ENCODE measurements at regions of chr3 and their contacts with region 1.

Region 1: DNA sequence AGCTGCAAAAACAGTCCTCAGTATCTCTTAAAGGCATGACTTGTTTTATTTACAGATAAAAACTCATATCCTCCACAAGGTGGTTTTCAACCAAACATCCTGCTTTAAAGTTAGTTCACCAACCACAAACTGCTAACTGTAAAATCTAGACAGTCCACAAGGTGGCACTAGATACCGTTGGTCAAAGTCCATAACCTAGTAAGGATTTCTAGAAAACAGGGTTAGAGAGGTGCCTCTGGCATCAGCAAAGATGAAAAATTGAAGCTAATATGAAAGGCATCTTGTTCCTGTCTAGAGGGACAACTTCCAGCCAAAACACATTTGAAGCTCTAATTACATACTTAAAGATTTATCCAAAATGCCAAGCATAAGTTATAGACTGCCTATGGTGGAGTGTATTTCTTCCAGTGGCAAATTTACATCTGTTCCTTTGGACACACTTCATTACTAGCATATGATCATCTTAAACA is 56.0 kb downstream of the ZMAT3 start:
- DNase-seq: peak; percentile 87
- ATAC-seq: peak; percentile 83
- H3K4me3 ChIP-seq: no peak overlapping the region
- H3K4me3 Mint-ChIP-seq: peak overlapping the region; percentile 41
- H3K27ac ChIP-seq: peak overlapping the region in 1 of 2 donors; percentile 81
- H3K27ac Mint-ChIP-seq: peak overlapping the region; percentile 75
- H3K4me1 ChIP-seq: peaks cover 16 to 34% of the 10 kb centered on the region in 2 donors
- H3K4me1 Mint-ChIP-seq: peaks cover 50% of the 10 kb centered on the region
- H3K27me3 ChIP-seq: no peaks in the 10 kb centered on the region
- H3K27me3 Mint-ChIP-seq: no peaks in the 10 kb centered on the region
- CTCF ChIP-seq: peak; percentile 94

Region 2: GRCh38 chr3:179027326-179027900 is 11.8 kb after region 1 on chr3:
- CTCF ChIA-PET with region 1: interaction called, 13 read pairs
- POLR2A ChIA-PET with region 1: no interaction called
- intact Hi-C with region 1: no loop called
- DNase-seq: no peak
- ATAC-seq: no peak
- H3K4me3 ChIP-seq: no peak overlapping the region
- H3K4me3 Mint-ChIP-seq: no peak overlapping the region
- H3K27ac ChIP-seq: no peak overlapping the region
- H3K27ac Mint-ChIP-seq: no peak overlapping the region
- H3K4me1 ChIP-seq: no peaks in the 10 kb centered on the region
- H3K4me1 Mint-ChIP-seq: no peaks in the 10 kb centered on the region
- H3K27me3 ChIP-seq: no peaks in the 10 kb centered on the region
- H3K27me3 Mint-ChIP-seq: no peaks in the 10 kb centered on the region
- CTCF ChIP-seq: no peak

Region 3: DNA sequence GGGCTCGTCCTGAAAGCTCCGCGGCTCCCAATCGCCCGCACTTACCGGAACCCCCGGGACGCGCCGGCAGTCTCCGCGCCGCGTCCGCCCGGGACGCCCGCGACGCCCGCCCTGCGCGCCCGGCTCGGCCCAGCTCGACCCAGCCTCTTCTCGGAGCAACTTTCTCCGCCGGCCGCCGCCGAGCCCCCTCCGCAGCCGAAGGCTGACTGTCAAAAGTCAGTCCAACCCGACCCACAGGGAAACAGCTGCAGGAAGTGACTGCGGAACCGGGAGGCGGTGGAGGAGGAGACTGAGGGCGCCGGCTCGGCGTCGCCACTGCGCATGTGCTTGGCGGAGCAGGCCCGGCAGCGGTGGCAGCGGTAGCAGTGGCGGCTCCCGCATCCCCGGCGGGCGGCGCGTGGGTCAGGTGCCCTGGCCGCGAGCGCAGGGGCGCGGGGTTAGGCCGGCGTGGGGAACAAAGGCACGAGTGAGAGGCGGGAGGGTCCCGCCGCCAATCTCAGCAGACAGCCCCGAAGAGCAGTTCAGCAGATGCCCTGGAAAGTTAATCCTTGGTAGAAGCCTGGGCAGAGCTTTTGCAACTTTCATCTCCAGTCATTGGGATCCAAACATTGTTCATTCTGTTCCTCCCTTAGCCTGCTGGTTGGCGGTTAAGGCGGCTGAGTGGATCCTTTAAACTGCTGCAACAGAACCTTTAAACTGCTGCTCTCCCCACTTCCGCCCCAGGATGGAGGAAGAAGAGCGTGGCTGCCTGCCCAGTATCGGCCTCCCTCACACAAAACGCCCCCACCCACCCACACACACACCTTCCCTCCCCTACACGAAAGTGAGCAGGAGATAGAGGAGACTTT is 56.2 kb after region 1 on chr3 and contains the start of gene ZMAT3:
- CTCF ChIA-PET with region 1: interaction called, 29 read pairs
- POLR2A ChIA-PET with region 1: no interaction called
- intact Hi-C with region 1: loop called (anchors 1 kb)
- DNase-seq: peak; percentile 90
- ATAC-seq: peak; percentile 79
- H3K4me3 ChIP-seq: peak within 1 kb of the TSS; percentile 61 to 85 (median 80)
- H3K4me3 Mint-ChIP-seq: peak within 1 kb of the TSS; percentile 100
- H3K27ac ChIP-seq: peak within 1 kb of the TSS; percentile 89 to 92
- H3K27ac Mint-ChIP-seq: peak within 1 kb of the TSS; percentile 96
- H3K4me1 ChIP-seq: peaks cover 36 to 41% of the 10 kb centered on the region in 2 donors
- H3K4me1 Mint-ChIP-seq: peaks cover 63% of the 10 kb centered on the region
- H3K27me3 ChIP-seq: no peaks in the 10 kb centered on the region
- H3K27me3 Mint-ChIP-seq: no peaks in the 10 kb centered on the region
- CTCF ChIP-seq: no peak
- total RNA-seq, gene ZMAT3: 17.5 and 19.5 TPM in 2 replicates

Region 4: GRCh38 chr3:179196098-179196497 is 180.5 kb after region 1 on chr3:
- CTCF ChIA-PET with region 1: interaction called, 4 read pairs
- POLR2A ChIA-PET with region 1: no interaction called
- intact Hi-C with region 1: loop called (anchors 5 kb)
- DNase-seq: peak; percentile 35
- ATAC-seq: peak; percentile 49
- H3K4me3 ChIP-seq: no peak overlapping the region
- H3K4me3 Mint-ChIP-seq: peak overlapping the region; percentile 51
- H3K27ac ChIP-seq: peak overlapping the region in 1 of 2 donors; percentile 46
- H3K27ac Mint-ChIP-seq: peak overlapping the region; percentile 72
- H3K4me1 ChIP-seq: peaks cover 17 to 29% of the 10 kb centered on the region in 2 donors
- H3K4me1 Mint-ChIP-seq: peaks cover 45% of the 10 kb centered on the region
- H3K27me3 ChIP-seq: no peaks in the 10 kb centered on the region
- H3K27me3 Mint-ChIP-seq: no peaks in the 10 kb centered on the region
- CTCF ChIP-seq: no peak

Region 5: DNA sequence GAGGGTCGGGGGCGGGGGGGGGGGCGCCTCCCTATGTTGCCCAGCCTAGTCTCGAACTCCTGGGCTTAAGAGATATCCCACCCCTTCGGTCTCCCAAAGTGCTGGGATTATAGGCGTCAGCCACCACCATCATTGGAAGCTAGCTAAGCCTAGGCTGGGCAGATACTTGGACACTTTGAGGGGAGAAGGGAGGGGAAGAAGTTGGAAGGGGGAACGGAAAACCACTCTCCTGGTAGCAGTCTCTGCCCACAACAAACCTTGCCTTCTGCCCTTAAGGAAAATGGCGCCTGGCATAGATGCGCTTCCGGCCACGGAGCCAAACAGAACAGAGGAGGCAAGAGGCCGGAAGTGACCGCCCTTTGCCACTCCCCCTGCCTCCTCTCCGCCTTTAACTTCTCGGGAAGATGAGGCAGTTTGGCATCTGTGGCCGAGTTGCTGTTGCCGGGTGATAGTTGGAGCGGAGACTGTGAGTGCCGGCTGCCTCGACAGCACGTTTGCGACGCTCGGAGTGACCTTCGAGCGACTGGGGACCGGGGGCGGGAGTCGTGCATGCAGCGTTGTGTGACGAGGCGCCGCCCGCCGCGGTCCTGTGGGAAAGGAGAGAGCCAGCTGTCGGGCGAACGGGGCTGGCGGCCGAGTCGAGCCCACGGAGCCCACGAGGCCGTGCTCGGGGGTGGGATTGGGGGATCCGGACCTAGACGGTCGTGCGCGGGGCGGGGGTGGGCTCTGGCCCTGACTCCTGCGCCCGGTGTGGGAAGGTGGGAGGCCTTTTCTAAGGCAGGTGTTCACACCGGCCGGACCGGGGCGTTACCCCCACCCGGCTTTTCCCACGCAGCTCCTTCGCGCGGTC is 332.0 kb after region 1 on chr3 and contains the start of gene MFN1:
- CTCF ChIA-PET with region 1: interaction called, 3 read pairs
- POLR2A ChIA-PET with region 1: no interaction called
- intact Hi-C with region 1: loop called (anchors 1 kb)
- DNase-seq: peak; percentile 92
- ATAC-seq: peak; percentile 88
- H3K4me3 ChIP-seq: peak within 1 kb of the TSS; percentile 83 to 99 (median 98)
- H3K4me3 Mint-ChIP-seq: peak within 1 kb of the TSS; percentile 95
- H3K27ac ChIP-seq: peak within 1 kb of the TSS; percentile 71 to 86
- H3K27ac Mint-ChIP-seq: peak within 1 kb of the TSS; percentile 93
- H3K4me1 ChIP-seq: peaks cover 17 to 32% of the 10 kb centered on the region in 2 donors
- H3K4me1 Mint-ChIP-seq: peaks cover 28% of the 10 kb centered on the region
- H3K27me3 ChIP-seq: no peaks in the 10 kb centered on the region
- H3K27me3 Mint-ChIP-seq: no peaks in the 10 kb centered on the region
- CTCF ChIP-seq: no peak
- total RNA-seq, gene MFN1: 98.9 and 108 TPM in 2 replicates

Region 6: DNA sequence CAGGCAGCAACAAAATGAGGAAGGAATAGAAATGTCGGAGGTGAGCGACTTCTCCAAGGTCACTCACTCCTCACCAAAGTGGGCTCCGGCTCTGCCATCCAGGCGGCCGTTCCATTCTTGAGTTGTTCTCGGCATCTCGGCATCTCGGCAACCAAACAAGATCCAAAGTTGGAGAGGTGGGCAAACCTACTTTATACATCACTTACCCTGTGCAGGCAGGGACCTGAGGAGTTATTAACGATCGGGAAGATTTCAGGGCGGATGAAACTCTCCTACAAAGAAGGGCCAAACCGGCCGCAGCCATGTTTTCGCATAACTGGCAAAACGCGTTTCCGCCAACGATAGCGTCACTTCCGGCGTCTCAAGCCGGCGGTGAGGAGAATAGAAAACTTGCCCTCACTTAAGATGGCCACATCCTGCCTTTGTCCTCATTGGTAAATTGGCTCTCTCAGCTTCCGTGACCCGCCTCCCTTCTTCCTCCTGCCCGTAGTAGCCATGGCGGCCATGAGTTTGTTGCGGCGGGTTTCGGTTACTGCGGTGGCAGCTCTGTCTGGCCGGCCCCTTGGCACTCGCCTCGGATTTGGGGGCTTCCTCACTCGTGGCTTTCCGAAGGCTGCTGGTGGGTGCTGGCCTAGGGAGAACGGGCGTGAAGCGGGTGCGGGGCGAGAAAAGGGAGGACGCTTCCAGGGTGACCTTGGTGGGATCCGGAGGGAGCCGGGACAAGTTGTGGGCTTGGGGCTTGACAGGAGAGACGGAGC is 588.9 kb after region 1 on chr3 and contains the starts of genes MRPL47 and NDUFB5:
- CTCF ChIA-PET with region 1: no interaction called
- POLR2A ChIA-PET with region 1: no interaction called
- intact Hi-C with region 1: loop called (anchors 5 kb)
- DNase-seq: peak; percentile 96
- ATAC-seq: peak; percentile 98
- H3K4me3 ChIP-seq: peak within 1 kb of the TSS; percentile 65 to 96 (median 80)
- H3K4me3 Mint-ChIP-seq: peak within 1 kb of the TSS; percentile 99
- H3K27ac ChIP-seq: peak within 1 kb of the TSS; percentile 72 to 97
- H3K27ac Mint-ChIP-seq: peak within 1 kb of the TSS; percentile 98
- H3K4me1 ChIP-seq: peaks cover 39 to 44% of the 10 kb centered on the region in 2 donors
- H3K4me1 Mint-ChIP-seq: peaks cover 51% of the 10 kb centered on the region
- H3K27me3 ChIP-seq: no peaks in the 10 kb centered on the region
- H3K27me3 Mint-ChIP-seq: no peaks in the 10 kb centered on the region
- CTCF ChIP-seq: no peak
- total RNA-seq, gene MRPL47: 20.2 and 22.0 TPM in 2 replicates
- total RNA-seq, gene NDUFB5: 52.9 and 60.2 TPM in 2 replicates

Measured in B cell (primary cell).